ENCODE measurements at regions of chr5 and their contacts with region 1.

Region 1: DNA sequence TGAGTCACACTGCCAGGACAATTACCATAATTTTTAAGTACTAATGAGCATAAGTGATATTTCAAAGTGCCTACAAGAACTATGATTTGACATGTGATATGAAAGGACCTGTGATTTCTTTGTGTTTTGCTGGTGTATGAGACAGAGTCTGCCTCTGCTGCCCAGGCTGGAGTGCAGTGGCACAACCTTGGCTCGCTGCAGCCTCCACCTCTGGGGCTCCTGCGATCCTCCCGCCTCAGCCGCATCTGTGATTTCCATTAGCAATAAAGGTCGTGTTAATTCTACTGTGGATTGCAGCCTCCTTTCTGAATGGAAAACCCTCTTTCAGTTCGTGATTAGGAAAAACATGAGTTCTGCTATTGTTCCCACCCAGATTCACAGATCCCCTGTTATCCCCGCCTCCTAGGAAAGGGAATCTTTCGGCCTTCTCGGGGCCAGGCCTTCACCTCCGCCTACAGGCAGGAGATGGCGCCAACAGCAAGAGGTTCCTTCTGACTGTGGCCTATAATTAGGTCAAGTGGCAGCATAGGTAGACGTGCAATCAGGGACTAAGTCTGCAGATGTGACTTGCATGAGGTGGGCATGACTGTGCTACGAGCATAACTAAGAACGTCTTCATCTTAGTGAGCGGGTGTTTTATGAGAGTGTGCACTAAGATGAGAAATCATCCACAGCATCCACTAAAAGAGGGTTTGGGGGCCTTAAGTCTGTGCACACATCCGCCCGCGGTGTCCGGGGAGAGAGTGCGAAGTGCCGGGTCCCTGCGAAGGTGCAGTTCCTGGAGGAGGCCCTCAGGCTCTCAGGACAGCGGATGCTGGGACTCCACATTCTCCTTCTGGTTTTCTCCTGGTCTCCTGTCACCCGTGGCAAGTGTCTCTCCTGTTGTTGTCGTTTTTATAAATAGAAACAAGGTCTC is 23.1 kb downstream of the TRIM7 start:
- DNase-seq: peak; percentile 81
- H3K4me3 Mint-ChIP-seq: no peak overlapping the region
- H3K27ac Mint-ChIP-seq: peak overlapping the region; percentile 4
- H3K4me1 Mint-ChIP-seq: peaks cover 28% of the 10 kb centered on the region
- H3K27me3 Mint-ChIP-seq: peaks cover 7% of the 10 kb centered on the region

Region 2: GRCh38 chr5:181167814-181168488 is 14.0 kb before region 1 on chr5:
- CTCF ChIA-PET with region 1: interaction called, 23 read pairs
- POLR2A ChIA-PET with region 1: interaction called, 3 read pairs
- intact Hi-C with region 1: loop called (anchors 1 kb)
- DNase-seq: peak; percentile 54
- H3K4me3 Mint-ChIP-seq: no peak overlapping the region
- H3K27ac Mint-ChIP-seq: no peak overlapping the region
- H3K4me1 Mint-ChIP-seq: peaks cover 57% of the 10 kb centered on the region
- H3K27me3 Mint-ChIP-seq: peaks cover 71% of the 10 kb centered on the region

Region 3: GRCh38 chr5:181207214-181208107 is 25.6 kb after region 1 on chr5:
- CTCF ChIA-PET with region 1: interaction called, 7 read pairs
- POLR2A ChIA-PET with region 1: interaction called, 37 read pairs
- intact Hi-C with region 1: no loop called
- DNase-seq: peak; percentile 90
- H3K4me3 Mint-ChIP-seq: peak overlapping the region; percentile 86
- H3K27ac Mint-ChIP-seq: peak overlapping the region; percentile 93
- H3K4me1 Mint-ChIP-seq: peaks cover 27% of the 10 kb centered on the region
- H3K27me3 Mint-ChIP-seq: peaks cover 17% of the 10 kb centered on the region

Region 4: GRCh38 chr5:181260387-181261319 is 78.7 kb after region 1 on chr5 and contains the start of gene TRIM52:
- CTCF ChIA-PET with region 1: interaction called, 5 read pairs
- POLR2A ChIA-PET with region 1: interaction called, 3 read pairs
- intact Hi-C with region 1: loop called (anchors 1 kb)
- DNase-seq: peak; percentile 93
- H3K4me3 Mint-ChIP-seq: peak within 1 kb of the TSS; percentile 96
- H3K27ac Mint-ChIP-seq: peak within 1 kb of the TSS; percentile 97
- H3K4me1 Mint-ChIP-seq: peaks cover 39% of the 10 kb centered on the region
- H3K27me3 Mint-ChIP-seq: no peaks in the 10 kb centered on the region
- total RNA-seq, gene TRIM52: 10.9 to 11.7 TPM

Region 5: GRCh38 chr5:181281984-181282814 is 100.3 kb after region 1 on chr5:
- CTCF ChIA-PET with region 1: no interaction called
- POLR2A ChIA-PET with region 1: no interaction called
- intact Hi-C with region 1: loop called (anchors 1 kb)
- DNase-seq: no peak
- H3K4me3 Mint-ChIP-seq: no peak overlapping the region
- H3K27ac Mint-ChIP-seq: no peak overlapping the region
- H3K4me1 Mint-ChIP-seq: no peaks in the 10 kb centered on the region
- H3K27me3 Mint-ChIP-seq: no peaks in the 10 kb centered on the region